ENCODE measurements at regions of chr14 and their contacts with region 1.

Region 1: GRCh38 chr14:102157346-102157745 is 17.6 kb downstream of the WDR20 start:
- DNase-seq: no peak
- H3K4me3 ChIP-seq: no peak overlapping the region
- H3K27ac ChIP-seq: peak overlapping the region; percentile 1; the same call in 1 of the 2 replicates
- H3K4me1 ChIP-seq: no peaks in the 10 kb centered on the region
- H3K27me3 ChIP-seq: no peaks in the 10 kb centered on the region
- CTCF ChIP-seq: no peak

Region 2: GRCh38 chr14:102146423-102146822 is 10.9 kb before region 1 on chr14:
- CTCF ChIA-PET with region 1: interaction called, 5 read pairs
- POLR2A ChIA-PET with region 1: interaction called, 21 read pairs
- intact Hi-C with region 1: no loop called
- DNase-seq: no peak
- H3K4me3 ChIP-seq: no peak overlapping the region
- H3K27ac ChIP-seq: no peak overlapping the region
- H3K4me1 ChIP-seq: peaks cover 11% of the 10 kb centered on the region
- H3K27me3 ChIP-seq: no peaks in the 10 kb centered on the region
- CTCF ChIP-seq: no peak

Region 3: DNA sequence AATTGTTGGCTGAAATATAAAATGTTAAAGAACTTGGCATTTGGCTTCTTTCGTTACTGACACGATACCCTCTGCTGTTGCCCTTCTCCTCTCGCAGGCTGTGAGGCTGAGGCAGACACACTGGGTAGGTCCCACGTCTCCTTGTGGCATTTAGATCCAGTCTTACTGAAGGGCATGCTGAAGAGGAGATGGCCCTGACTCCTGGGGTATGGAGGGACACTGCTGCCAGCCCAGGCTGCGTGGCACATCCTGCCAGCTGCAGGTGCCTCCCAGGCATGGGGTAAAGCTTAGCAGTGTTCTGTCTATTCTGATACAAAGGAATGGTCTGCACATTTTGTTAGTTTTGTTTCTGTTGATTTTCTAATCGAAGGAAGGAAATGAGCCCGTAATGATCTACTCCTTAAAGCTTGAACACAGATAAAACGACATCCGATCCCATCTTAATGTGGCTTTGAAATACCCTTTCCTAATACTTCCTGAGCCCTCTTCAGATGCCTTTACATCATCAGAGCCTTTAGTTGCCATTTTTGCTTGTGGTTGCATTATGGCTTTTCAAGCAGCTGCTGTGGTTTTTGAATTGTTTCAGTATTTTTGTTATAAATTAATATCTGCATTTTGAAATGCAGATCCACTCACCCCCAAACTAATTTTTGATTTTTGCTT is 43.5 kb after region 1 on chr14:
- CTCF ChIA-PET with region 1: no interaction called
- POLR2A ChIA-PET with region 1: no interaction called
- intact Hi-C with region 1: no loop called
- DNase-seq: no peak
- H3K4me3 ChIP-seq: no peak overlapping the region
- H3K27ac ChIP-seq: no peak overlapping the region
- H3K4me1 ChIP-seq: no peaks in the 10 kb centered on the region
- H3K27me3 ChIP-seq: no peaks in the 10 kb centered on the region
- CTCF ChIP-seq: no peak

Region 4: DNA sequence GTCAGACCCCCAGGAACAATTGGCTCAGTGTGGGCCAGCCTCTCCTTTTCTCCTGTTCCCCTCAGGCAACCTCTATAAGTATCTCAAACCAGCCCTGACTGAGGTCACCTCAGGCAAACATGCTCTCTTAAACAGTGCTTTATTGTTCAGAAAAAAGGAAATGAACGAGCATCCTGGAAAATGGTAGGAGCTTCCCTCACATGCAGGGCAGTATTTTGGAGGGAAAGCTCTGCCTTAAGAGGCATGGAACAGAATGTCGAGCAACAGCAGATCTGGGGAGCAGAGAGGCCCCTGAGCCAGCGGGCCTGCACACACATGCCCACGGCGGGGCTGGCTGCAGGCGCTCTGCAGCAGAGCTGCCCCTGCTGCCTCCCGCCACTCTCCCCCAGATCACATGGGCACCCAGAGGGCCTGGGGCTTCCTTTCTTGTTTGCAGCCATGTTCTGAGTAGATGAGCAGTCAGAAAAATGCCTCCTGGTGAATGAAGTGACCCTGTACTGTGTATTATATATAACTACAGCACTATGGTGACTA is 105.7 kb after region 1 on chr14:
- CTCF ChIA-PET with region 1: no interaction called
- POLR2A ChIA-PET with region 1: no interaction called
- intact Hi-C with region 1: no loop called
- DNase-seq: peak; percentile 36 to 84
- H3K4me3 ChIP-seq: no peak overlapping the region
- H3K27ac ChIP-seq: peak overlapping the region; percentile 20
- H3K4me1 ChIP-seq: peaks cover 17% of the 10 kb centered on the region
- H3K27me3 ChIP-seq: no peaks in the 10 kb centered on the region
- CTCF ChIP-seq: no peak

Region 5: GRCh38 chr14:103444837-103445524 is 1287.6 kb after region 1 on chr14:
- CTCF ChIA-PET with region 1: no interaction called
- POLR2A ChIA-PET with region 1: interaction called, 15 read pairs
- intact Hi-C with region 1: no loop called
- DNase-seq: no peak
- H3K4me3 ChIP-seq: no peak overlapping the region
- H3K27ac ChIP-seq: 0 out of 2 replicates have a peak overlapping the region, but pooled peaks have one; percentile 2
- H3K4me1 ChIP-seq: no peaks in the 10 kb centered on the region
- H3K27me3 ChIP-seq: no peaks in the 10 kb centered on the region
- CTCF ChIP-seq: no peak

Measured in PC-9 (cell line).